KBM-7 (cell line): ENCODE measurements at regions of chr11 and their contacts with region 1.

Region 1: GRCh38 chr11:57249384-57250319 is 12.6 kb upstream of the APLNR start:
- DNase-seq: peak; percentile 84

Region 2: GRCh38 chr11:56841210-56841810 is 408.3 kb before region 1 on chr11:
- in situ Hi-C with region 1: loop called (anchors 25 kb)
- DNase-seq: peak; percentile 55

Region 3: GRCh38 chr11:57131080-57131790 is 118.4 kb before region 1 on chr11:
- in situ Hi-C with region 1: loop called (anchors 10 kb)
- DNase-seq: peak; percentile 12

Region 4: GRCh38 chr11:57597916-57598830 is 348.5 kb after region 1 on chr11:
- in situ Hi-C with region 1: no loop called
- DNase-seq: no peak